ENCODE measurements at regions of chr2 and their contacts with region 1.

Region 1: GRCh38 chr2:192162392-192163042 is 32.2 kb downstream of the TMEFF2 start:
- H3K4me3 Mint-ChIP-seq: no peak overlapping the region
- H3K27ac Mint-ChIP-seq: no peak overlapping the region
- H3K4me1 Mint-ChIP-seq: peaks cover 29% of the 10 kb centered on the region
- H3K27me3 Mint-ChIP-seq: no peaks in the 10 kb centered on the region

Region 2: DNA sequence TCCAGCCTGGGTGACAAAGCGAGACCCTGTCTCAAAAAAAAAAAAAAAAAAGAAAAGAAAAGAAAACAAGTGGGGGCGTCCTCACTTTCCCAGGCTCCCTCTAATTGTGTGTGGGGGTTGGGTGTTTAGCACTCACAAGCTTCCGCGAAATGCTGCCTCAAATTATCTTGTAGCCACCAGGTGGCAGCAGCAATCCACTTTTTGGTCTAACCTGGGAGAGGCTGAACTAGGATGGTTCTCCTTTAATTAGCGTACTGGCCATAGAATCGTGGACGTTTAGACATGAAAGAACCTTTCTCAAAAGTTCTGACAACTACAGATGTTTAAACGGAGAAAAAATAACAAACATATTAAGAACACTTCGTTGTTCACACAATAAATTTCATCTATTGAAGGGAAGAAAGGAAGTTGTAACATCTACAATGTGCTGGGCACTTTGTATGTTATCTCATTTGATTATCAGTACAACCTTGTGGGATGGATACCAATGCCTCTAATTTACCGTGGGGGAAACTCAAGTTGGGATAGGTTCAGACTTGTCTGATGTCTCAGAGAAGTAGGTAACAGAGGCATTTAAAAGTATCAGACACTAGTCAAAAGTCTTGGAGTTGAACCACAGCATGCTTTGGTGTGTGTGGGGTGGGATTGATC is 607.3 kb before region 1 on chr2:
- intact Hi-C with region 1: loop called (anchors 1 kb)
- H3K4me3 Mint-ChIP-seq: no peak overlapping the region
- H3K27ac Mint-ChIP-seq: no peak overlapping the region
- H3K4me1 Mint-ChIP-seq: peaks cover 5% of the 10 kb centered on the region
- H3K27me3 Mint-ChIP-seq: peaks cover 3% of the 10 kb centered on the region

Region 3: GRCh38 chr2:191691016-191691735 is 471.3 kb before region 1 on chr2:
- intact Hi-C with region 1: loop called (anchors 5 kb)
- H3K4me3 Mint-ChIP-seq: no peak overlapping the region
- H3K27ac Mint-ChIP-seq: peak overlapping the region; percentile 25
- H3K4me1 Mint-ChIP-seq: peaks cover 15% of the 10 kb centered on the region
- H3K27me3 Mint-ChIP-seq: no peaks in the 10 kb centered on the region

Region 4: GRCh38 chr2:191811807-191812602 is 350.5 kb before region 1 on chr2:
- intact Hi-C with region 1: loop called (anchors 1 kb)
- H3K4me3 Mint-ChIP-seq: no peak overlapping the region
- H3K27ac Mint-ChIP-seq: no peak overlapping the region
- H3K4me1 Mint-ChIP-seq: no peaks in the 10 kb centered on the region
- H3K27me3 Mint-ChIP-seq: no peaks in the 10 kb centered on the region

Measured in dendritic cell treated with granulocyte-macrophage colony-stimulating factor and Interleukin-4, amounts not matched to agents 40 ng/mL and 50 ng/mL, for 4 days (primary cell).